Transverse colon (tissue), 4 donors: ENCODE measurements at regions of chr9 and their contacts with region 1.

Region 1: GRCh38 chr9:128786681-128787601 is at the start of gene TBC1D13:
- DNase-seq: peak; percentile 91
- H3K4me3 ChIP-seq: peak within 1 kb of the TSS; percentile 65 to 98 (median 81)
- H3K27ac ChIP-seq: peak within 1 kb of the TSS; percentile 87 to 92 (median 89)
- H3K4me1 ChIP-seq: peaks cover 8 to 20% (median 11%) of the 10 kb centered on the region in 4 donors
- H3K27me3 ChIP-seq: no peaks in the 10 kb centered on the region
- CTCF ChIP-seq: no peak
- EP300 ChIP-seq: no peak
- POLR2A ChIP-seq: peak; percentile 60
- total RNA-seq, gene TBC1D13: 9.6 to 244 (median 21.6) TPM

Region 2: DNA sequence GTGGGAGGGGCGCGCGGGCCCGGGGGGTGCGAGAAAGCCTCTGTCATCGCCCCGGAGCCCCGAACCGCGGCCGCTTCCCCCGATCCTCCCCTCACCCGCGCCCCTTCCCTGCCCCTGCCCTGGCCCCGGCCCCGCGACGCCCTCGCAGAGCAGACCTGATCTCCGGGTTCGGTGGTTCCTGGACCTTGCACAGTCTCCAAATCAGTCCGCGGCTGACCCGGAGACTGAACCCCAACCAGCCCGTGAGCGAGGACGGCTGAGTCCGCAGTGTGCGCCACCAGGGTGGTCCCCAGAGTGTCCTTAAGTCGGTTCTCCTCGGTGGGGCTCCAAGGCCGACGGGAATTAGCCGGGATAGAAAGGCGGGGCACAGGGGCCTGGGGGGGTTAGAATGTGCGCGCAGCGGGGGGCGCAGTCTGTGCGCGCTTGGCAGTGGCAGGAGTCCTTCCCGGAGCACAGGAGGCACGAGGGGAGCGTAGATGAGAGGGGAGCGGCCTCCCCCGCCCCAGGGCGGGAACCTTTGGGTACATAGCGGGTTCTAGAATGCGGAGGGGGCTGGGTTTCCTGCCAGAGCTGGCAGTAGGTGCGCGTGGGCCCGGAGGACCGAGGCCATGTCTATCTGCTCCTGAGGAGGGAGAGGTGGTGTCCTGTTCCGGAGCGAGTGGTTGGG is 83.9 kb before region 1 on chr9:
- in situ Hi-C with region 1: no loop called
- intact Hi-C with region 1: loop called (anchors 1 kb)
- DNase-seq: no peak
- H3K4me3 ChIP-seq: peak overlapping the region; percentile 66 to 85 (median 72)
- H3K27ac ChIP-seq: peak overlapping the region; percentile 66 to 83 (median 76)
- H3K4me1 ChIP-seq: peaks cover 0 to 10% (median 6%) of the 10 kb centered on the region in 4 donors
- H3K27me3 ChIP-seq: no peaks in the 10 kb centered on the region
- CTCF ChIP-seq: no peak
- EP300 ChIP-seq: no peak
- POLR2A ChIP-seq: no peak

Region 3: GRCh38 chr9:128771745-128772519 is 15.0 kb before region 1 on chr9 and contains the start of gene ZER1:
- in situ Hi-C with region 1: no loop called
- intact Hi-C with region 1: loop called (anchors 1 kb)
- DNase-seq: peak; percentile 96
- H3K4me3 ChIP-seq: peak within 1 kb of the TSS; percentile 76 to 94 (median 84)
- H3K27ac ChIP-seq: peak within 1 kb of the TSS; percentile 91 to 96 (median 94)
- H3K4me1 ChIP-seq: peaks cover 9 to 21% (median 14%) of the 10 kb centered on the region in 4 donors
- H3K27me3 ChIP-seq: no peaks in the 10 kb centered on the region
- CTCF ChIP-seq: peak in 1 of 5 experiments; percentile 9
- EP300 ChIP-seq: peak; percentile 59
- POLR2A ChIP-seq: peak; percentile 75
- total RNA-seq, gene ZER1: 57.5 to 116 (median 73.8) TPM

Region 4: DNA sequence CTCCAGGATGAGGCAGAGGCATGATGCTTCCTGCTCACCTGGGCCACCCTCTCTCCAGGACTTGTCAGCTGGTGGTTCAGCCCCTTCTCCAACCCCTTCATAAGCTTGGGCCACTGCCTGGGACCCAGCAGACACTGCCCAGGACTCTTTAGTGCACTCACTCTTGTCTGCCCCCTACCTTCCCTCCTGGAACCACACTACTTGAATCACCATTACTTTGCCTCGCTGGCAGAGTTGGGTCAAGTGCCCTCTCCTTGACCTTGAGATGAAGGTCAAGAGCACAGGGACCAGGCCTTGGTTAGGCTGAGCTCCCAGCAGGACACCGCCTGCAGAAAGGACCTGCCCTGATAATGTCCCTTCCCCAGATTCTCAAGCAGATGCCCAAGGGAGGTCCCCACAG is 22.9 kb after region 1 on chr9:
- in situ Hi-C with region 1: no loop called
- intact Hi-C with region 1: no loop called
- DNase-seq: no peak
- H3K4me3 ChIP-seq: no peak overlapping the region
- H3K27ac ChIP-seq: no peak overlapping the region
- H3K4me1 ChIP-seq: no peaks in the 10 kb centered on the region
- H3K27me3 ChIP-seq: no peaks in the 10 kb centered on the region
- CTCF ChIP-seq: no peak
- EP300 ChIP-seq: no peak
- POLR2A ChIP-seq: no peak

Region 5: DNA sequence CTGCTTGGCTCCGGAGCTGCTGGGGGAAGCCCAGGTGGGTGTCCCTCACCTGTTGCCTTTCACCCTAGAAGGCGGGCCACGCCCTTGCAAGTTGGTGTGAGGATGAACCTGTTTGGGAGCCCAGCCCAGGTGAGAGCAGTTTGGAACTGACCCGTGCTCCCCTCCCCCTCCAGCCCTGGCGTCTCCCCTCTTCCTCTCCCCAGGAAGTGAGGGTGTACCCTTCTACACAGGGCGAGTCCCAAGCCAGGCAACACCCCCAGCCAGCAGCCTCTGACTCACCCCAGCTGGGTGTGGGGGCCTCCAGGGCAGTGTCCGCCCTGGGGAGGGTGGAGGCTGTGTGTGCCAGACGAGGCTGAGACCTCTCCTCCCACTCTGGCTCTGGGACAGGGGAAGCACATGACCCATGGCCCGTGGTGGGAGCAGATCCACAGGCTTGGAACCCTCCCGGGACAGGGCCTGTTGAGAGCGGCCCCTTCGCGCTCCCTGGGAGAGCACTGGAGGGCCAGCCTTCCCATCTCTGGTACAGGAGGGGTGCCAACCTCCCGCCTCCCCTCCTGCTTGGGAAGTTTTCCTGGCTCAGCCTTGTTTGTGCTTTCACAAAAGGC is 105.5 kb after region 1 on chr9:
- in situ Hi-C with region 1: no loop called
- intact Hi-C with region 1: no loop called
- DNase-seq: peak; percentile 89
- H3K4me3 ChIP-seq: peak overlapping the region in 1 of 4 donors; percentile 21
- H3K27ac ChIP-seq: peak overlapping the region; percentile 84 to 87 (median 86)
- H3K4me1 ChIP-seq: peaks cover 21 to 45% (median 31%) of the 10 kb centered on the region in 4 donors
- H3K27me3 ChIP-seq: no peaks in the 10 kb centered on the region
- CTCF ChIP-seq: no peak
- EP300 ChIP-seq: no peak
- POLR2A ChIP-seq: peak; percentile 58